CD4-positive, alpha-beta T cell (primary cell): ENCODE measurements at regions of chr19 and their contacts with region 1.

Region 1: DNA sequence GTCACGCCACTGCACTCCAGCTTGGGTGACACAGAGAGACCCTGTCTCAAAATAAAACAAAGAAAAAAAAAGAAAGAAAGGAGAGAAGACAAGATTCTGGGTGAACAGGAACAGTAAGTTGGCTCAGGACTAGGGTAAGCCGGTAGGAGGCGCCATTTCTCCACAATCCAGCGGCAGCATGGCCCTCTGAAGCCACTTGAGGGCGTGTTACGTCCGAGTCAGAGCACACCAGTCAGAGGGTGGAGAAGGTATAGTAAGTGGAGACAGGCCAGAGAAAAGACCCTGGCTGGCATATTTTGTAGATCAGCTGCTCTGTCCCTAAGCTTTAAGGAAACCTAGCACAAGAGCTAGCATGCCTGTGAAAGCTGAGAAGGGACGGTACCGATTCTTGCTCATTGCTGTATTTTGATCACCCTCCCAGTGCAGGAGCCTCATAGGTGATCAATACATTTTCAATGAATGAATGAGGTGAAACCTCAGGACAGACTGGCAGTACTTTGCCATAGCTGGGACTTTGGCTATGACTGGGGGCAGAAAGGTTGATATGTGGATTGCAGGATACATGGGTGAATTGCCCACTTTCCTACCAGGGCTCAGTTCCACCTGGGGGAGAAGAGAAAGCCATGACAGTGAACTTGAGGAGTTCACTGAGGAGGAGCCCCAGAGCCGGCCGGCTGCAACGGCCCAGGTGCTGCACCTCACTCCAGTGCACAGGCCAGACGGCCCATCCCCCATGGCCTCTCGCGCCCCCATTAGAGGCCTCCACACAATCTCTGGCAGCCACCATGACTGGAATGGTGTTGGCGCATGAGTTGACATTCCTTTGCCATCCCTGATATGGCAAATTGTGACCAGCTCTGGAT is 23.5 kb downstream of the POU2F2 start:
- DNase-seq: peak; percentile 82 to 96 (median 89)
- ATAC-seq: peak; percentile 100
- H3K4me3 ChIP-seq: no peak overlapping the region
- H3K4me3 Mint-ChIP-seq: no peak overlapping the region
- H3K27ac ChIP-seq: no peak overlapping the region
- H3K27ac Mint-ChIP-seq: peak overlapping the region; percentile 5
- H3K4me1 ChIP-seq: peaks cover 9% of the 10 kb centered on the region
- H3K4me1 Mint-ChIP-seq: peaks cover 10% of the 10 kb centered on the region
- H3K27me3 ChIP-seq: no peaks in the 10 kb centered on the region
- H3K27me3 Mint-ChIP-seq: no peaks in the 10 kb centered on the region
- CTCF ChIP-seq: peak; percentile 100

Region 2: DNA sequence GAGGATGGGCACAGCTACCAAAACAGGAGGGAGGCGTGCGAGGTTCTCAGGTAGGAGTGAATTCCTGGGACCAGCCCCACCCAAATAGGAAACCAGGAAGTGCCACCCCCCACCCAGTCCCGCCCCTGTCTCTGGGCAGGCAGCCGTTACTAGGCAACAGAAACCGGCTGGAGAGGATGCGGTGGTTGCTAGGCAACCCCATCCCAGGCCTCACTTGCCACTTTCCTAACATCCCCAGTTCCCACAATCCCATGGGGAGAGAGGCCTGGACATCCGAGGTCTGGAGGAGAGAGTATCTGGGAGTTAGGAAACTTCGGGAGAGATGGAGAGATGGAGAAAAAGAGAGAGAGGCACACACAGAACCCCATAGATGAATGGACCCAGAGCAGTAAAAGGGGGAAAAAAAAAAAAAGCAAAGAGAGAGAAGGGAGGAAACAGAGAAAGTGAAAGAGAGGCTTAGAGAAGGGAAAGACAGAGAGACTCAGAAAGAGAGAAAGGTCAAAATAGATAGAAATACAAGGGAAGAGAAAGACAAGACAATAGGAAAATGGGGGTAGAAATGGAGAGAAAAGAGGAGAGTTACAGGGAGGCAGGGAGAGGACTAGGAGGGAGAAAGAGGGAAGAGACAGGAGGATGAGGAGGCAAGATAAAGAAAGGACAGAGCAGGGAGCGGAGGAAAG is 42.5 kb before region 1 on chr19:
- CTCF ChIA-PET with region 1: no interaction called
- POLR2A ChIA-PET with region 1: no interaction called
- intact Hi-C with region 1: no loop called
- DNase-seq: no peak
- ATAC-seq: no peak
- H3K4me3 ChIP-seq: no peak overlapping the region
- H3K4me3 Mint-ChIP-seq: no peak overlapping the region
- H3K27ac ChIP-seq: no peak overlapping the region
- H3K27ac Mint-ChIP-seq: no peak overlapping the region
- H3K4me1 ChIP-seq: peaks cover 14% of the 10 kb centered on the region
- H3K4me1 Mint-ChIP-seq: no peaks in the 10 kb centered on the region
- H3K27me3 ChIP-seq: peaks cover 23 to 28% of the 10 kb centered on the region in 2 experiments
- H3K27me3 Mint-ChIP-seq: peaks cover 11% of the 10 kb centered on the region
- CTCF ChIP-seq: no peak

Region 3: GRCh38 chr19:42122691-42123607 is 14.2 kb after region 1 on chr19:
- CTCF ChIA-PET with region 1: interaction called, 16 read pairs
- POLR2A ChIA-PET with region 1: no interaction called
- intact Hi-C with region 1: no loop called
- DNase-seq: peak in 7 of 14 experiments; percentile 23 to 53 (median 42)
- ATAC-seq: peak; percentile 27
- H3K4me3 ChIP-seq: peak overlapping the region; percentile 40
- H3K4me3 Mint-ChIP-seq: peak overlapping the region; percentile 59
- H3K27ac ChIP-seq: peak overlapping the region; percentile 89 to 91
- H3K27ac Mint-ChIP-seq: peak overlapping the region; percentile 88
- H3K4me1 ChIP-seq: peaks cover 61% of the 10 kb centered on the region
- H3K4me1 Mint-ChIP-seq: peaks cover 60% of the 10 kb centered on the region
- H3K27me3 ChIP-seq: no peaks in the 10 kb centered on the region
- H3K27me3 Mint-ChIP-seq: no peaks in the 10 kb centered on the region
- CTCF ChIP-seq: no peak

Region 4: GRCh38 chr19:42184401-42184861 is 75.7 kb after region 1 on chr19:
- CTCF ChIA-PET with region 1: interaction called, 4 read pairs
- POLR2A ChIA-PET with region 1: no interaction called
- intact Hi-C with region 1: loop called (anchors 1 to 2 kb)
- DNase-seq: peak; percentile 51 to 82 (median 62)
- ATAC-seq: peak; percentile 62
- H3K4me3 ChIP-seq: no peak overlapping the region
- H3K4me3 Mint-ChIP-seq: peak overlapping the region; percentile 6
- H3K27ac ChIP-seq: no peak overlapping the region
- H3K27ac Mint-ChIP-seq: no peak overlapping the region
- H3K4me1 ChIP-seq: peaks cover 56% of the 10 kb centered on the region
- H3K4me1 Mint-ChIP-seq: peaks cover 53% of the 10 kb centered on the region
- H3K27me3 ChIP-seq: peaks cover 6% of the 10 kb centered on the region in 2 experiments
- H3K27me3 Mint-ChIP-seq: peaks cover 9% of the 10 kb centered on the region
- CTCF ChIP-seq: peak; percentile 90

Region 5: DNA sequence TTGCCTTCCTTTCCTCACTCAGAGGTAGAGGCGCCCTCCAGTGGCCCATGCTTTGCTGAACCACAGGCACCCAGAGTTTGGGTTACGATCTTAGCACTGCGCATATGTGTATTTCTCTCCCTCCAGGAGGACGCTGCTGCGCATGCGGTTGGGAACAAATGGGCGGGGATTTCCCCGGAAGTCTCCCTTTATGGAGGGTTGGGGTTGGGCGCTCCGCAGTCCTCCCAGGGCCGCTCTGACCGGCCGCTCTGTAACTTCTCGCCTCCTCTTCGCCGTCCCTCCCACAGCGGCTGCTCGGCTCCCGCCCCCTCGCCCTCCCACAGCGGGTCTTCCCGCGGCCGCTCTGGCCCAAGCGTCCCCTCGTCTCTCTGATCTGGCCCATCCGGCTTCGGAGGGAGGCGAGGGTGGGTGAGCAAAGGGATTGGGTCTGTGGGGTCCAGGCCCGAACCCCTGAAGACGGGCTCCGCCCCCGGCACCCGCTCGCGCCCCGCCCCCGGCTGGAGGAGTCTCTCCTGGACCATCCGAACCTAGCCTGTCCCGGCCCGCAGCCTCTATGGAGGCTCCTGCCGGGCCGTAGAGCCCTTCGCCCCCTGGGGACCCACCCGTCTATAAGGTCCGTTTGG is 216.6 kb after region 1 on chr19 and contains the start of gene MEGF8:
- CTCF ChIA-PET with region 1: no interaction called
- POLR2A ChIA-PET with region 1: no interaction called
- intact Hi-C with region 1: loop called (anchors 1 kb)
- DNase-seq: peak; percentile 97 to 99 (median 98)
- ATAC-seq: peak; percentile 95
- H3K4me3 ChIP-seq: peak within 1 kb of the TSS; percentile 84
- H3K4me3 Mint-ChIP-seq: peak within 1 kb of the TSS; percentile 94
- H3K27ac ChIP-seq: peak within 1 kb of the TSS; percentile 46 to 55
- H3K27ac Mint-ChIP-seq: peak within 1 kb of the TSS; percentile 50
- H3K4me1 ChIP-seq: peaks cover 26% of the 10 kb centered on the region
- H3K4me1 Mint-ChIP-seq: peaks cover 25% of the 10 kb centered on the region
- H3K27me3 ChIP-seq: peaks cover 16 to 21% of the 10 kb centered on the region in 2 experiments
- H3K27me3 Mint-ChIP-seq: peaks cover 25% of the 10 kb centered on the region
- CTCF ChIP-seq: peak; percentile 90
- total RNA-seq, gene MEGF8: 4.1 to 4.2 TPM

Region 6: DNA sequence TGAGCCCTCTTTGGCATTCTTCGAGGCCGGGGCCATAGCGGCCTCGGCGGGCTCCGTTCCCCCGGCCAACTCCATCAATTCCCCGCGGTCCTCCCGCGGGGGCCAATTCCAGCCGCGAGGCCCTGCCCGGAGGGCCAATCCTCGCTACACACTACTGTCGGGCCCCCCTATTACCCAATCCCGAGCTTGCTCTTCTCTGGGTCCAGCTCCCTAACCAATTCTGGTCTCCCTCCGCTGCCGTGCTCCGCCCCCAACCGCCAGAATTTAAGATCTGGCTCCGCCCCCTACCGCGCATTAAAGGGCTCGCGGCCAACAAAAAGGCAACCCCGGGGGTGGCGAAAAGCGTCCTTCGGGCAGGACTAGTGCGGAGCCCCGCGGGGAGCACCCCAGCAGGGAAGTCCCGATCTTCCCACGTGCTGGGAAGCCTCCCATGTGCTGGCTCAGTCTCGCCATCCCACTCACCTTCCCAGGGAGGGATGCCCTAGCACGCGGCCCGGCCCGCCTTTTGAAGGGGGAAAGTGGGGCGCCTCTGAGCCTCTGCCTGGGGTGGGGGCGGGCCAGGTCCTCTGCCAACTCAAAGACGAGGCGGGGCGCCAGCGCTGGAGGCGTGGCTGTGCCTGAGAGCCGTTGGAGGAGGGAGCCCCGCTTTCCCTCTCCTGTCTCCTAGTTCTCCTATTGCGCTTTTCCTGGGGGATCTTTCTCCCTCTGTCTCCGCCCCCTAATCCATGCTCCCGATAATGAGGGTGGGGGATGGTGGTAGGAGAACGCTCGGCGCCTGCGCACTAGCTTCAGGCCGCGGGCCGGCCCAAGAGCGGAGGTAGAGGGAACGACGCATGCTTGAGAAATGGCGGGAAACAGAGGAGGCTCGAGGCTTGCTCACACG is 314.9 kb after region 1 on chr19:
- CTCF ChIA-PET with region 1: no interaction called
- POLR2A ChIA-PET with region 1: no interaction called
- intact Hi-C with region 1: loop called in 1 of 2 experiments (anchors 5 kb)
- DNase-seq: peak; percentile 88 to 96 (median 92)
- ATAC-seq: peak; percentile 84
- H3K4me3 ChIP-seq: peak overlapping the region; percentile 80
- H3K4me3 Mint-ChIP-seq: peak overlapping the region; percentile 92
- H3K27ac ChIP-seq: peak overlapping the region; percentile 63 to 80
- H3K27ac Mint-ChIP-seq: peak overlapping the region; percentile 78
- H3K4me1 ChIP-seq: peaks cover 46% of the 10 kb centered on the region
- H3K4me1 Mint-ChIP-seq: peaks cover 49% of the 10 kb centered on the region
- H3K27me3 ChIP-seq: no peaks in the 10 kb centered on the region
- H3K27me3 Mint-ChIP-seq: no peaks in the 10 kb centered on the region
- CTCF ChIP-seq: no peak

Region 7: GRCh38 chr19:42440357-42441048 is 331.7 kb after region 1 on chr19:
- CTCF ChIA-PET with region 1: interaction called, 7 read pairs
- POLR2A ChIA-PET with region 1: no interaction called
- intact Hi-C with region 1: loop called (anchors 1 to 2 kb)
- DNase-seq: peak; percentile 65 to 89 (median 77)
- ATAC-seq: peak; percentile 54
- H3K4me3 ChIP-seq: no peak overlapping the region
- H3K4me3 Mint-ChIP-seq: peak overlapping the region; percentile 8
- H3K27ac ChIP-seq: no peak overlapping the region
- H3K27ac Mint-ChIP-seq: peak overlapping the region; percentile 8
- H3K4me1 ChIP-seq: peaks cover 35% of the 10 kb centered on the region
- H3K4me1 Mint-ChIP-seq: peaks cover 46% of the 10 kb centered on the region
- H3K27me3 ChIP-seq: no peaks in the 10 kb centered on the region
- H3K27me3 Mint-ChIP-seq: no peaks in the 10 kb centered on the region
- CTCF ChIP-seq: peak; percentile 98